ENCODE measurements at regions of chr17 and their contacts with region 1.

Region 1: DNA sequence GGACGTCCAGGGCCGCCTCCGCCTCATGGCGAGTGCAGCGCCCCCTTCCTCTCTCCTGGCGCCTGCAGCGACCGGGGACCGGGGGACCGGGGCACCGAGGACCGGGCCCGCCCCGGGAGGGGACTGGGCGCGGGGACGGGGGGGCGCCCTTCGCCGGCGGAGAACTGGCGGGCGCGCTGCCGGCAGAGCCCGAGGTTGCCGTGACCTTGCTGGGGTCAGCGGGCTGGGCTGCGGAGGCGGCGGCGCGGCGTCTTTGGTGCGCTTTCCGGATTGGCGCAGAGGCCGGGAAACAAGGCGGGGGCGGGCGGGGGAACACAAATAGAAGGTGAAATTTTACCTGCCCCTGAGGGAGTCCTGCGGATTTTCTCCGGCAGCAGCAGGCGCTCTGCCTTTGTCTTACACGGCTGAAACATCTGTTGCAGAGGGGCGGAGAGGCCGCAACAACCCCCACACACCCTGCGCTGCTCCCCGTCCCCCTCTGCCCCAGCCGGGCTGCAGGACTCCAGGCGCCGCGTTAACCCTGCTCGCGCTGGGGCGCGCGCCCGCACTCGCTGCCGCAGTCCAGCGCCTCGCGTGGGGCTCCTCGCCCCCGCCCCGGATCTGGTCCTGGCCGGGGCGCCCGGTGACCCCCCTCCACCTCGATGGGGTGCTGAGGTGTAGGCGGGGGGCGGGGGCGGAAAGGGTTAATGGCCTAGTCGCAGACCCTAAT is 53.5 kb downstream of the SREBF1 start:
- DNase-seq: peak; percentile 32
- ATAC-seq: peak; percentile 32
- H3K4me3 Mint-ChIP-seq: peak overlapping the region; percentile 88
- H3K27ac Mint-ChIP-seq: no peak overlapping the region
- H3K4me1 Mint-ChIP-seq: peaks cover 27% of the 10 kb centered on the region
- H3K27me3 Mint-ChIP-seq: peaks cover 2% of the 10 kb centered on the region
- CTCF ChIP-seq: no peak

Region 2: DNA sequence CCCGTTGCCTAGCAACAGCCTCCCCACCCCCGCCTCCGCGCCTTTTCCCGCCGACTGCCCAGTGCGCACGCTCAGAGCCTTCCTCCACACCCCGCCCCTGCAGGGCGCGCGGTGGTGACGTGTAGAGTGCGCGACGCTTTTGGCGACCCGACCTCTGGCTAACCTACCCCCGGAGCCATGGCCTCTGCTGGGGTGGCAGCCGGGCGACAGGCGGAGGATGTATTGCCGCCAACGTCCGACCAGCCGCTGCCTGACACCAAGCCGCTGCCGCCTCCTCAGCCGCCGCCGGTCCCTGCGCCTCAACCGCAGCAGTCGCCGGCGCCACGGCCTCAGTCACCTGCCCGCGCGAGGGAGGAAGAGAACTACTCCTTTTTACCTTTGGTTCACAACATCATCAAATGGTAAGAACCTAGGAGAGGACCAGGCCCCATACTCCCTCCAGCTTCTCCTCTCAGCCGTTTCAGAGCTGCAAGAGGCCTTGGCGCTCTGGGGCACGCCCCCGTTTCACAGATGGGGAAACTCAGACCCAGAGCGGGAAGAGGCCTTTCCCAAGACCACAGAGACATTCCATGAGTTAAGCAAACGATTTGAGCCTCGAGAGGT is 306.3 kb before region 1 on chr17 and contains the start of gene MED9:
- CTCF ChIA-PET with region 1: no interaction called
- POLR2A ChIA-PET with region 1: interaction called, 10 read pairs
- intact Hi-C with region 1: loop called (anchors 1 kb)
- DNase-seq: peak; percentile 93
- ATAC-seq: peak; percentile 100
- H3K4me3 Mint-ChIP-seq: peak within 1 kb of the TSS; percentile 90
- H3K27ac Mint-ChIP-seq: peak within 1 kb of the TSS; percentile 84
- H3K4me1 Mint-ChIP-seq: peaks cover 30% of the 10 kb centered on the region
- H3K27me3 Mint-ChIP-seq: no peaks in the 10 kb centered on the region
- CTCF ChIP-seq: no peak
- total RNA-seq, gene MED9: 16.2 and 20.1 TPM in 2 replicates

Region 3: GRCh38 chr17:17694169-17695081 is 88.8 kb before region 1 on chr17:
- CTCF ChIA-PET with region 1: no interaction called
- POLR2A ChIA-PET with region 1: no interaction called
- intact Hi-C with region 1: loop called (anchors 1 kb)
- DNase-seq: peak; percentile 81
- ATAC-seq: peak; percentile 70
- H3K4me3 Mint-ChIP-seq: peak overlapping the region; percentile 86
- H3K27ac Mint-ChIP-seq: peak overlapping the region; percentile 96
- H3K4me1 Mint-ChIP-seq: peaks cover 54% of the 10 kb centered on the region
- H3K27me3 Mint-ChIP-seq: no peaks in the 10 kb centered on the region
- CTCF ChIP-seq: no peak

Region 4: DNA sequence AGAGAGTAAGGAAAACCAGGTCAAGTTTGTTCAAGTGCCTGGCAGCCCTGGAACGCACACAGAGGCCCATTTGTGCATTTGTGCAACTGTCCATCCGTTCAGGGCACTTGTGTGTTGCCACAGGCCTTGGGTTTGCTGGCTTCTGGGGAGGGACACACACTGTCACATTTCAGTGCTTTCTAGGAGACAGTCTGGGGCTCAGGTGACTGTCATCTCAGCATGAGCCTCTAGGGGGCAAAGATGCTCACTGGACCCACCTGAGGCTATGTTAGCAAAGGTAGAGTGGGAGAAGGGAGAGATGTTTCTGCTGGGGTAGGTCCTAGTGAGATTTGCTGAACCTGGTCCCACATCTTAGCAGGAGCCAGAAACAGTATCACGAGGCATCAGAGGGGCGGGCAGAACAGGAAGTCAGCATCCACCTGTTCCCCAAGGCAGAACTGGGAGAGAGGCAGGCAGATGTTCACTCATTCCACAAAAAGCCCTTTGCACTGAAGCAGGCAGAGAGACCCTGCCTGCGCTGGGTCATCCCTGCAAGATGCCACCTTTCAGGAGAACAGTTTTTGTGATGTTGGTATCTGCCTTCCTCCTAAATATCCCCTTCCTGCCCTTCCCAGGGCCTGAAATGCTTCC is 53.5 kb before region 1 on chr17:
- CTCF ChIA-PET with region 1: no interaction called
- POLR2A ChIA-PET with region 1: no interaction called
- intact Hi-C with region 1: loop called (anchors 2 kb)
- DNase-seq: no peak
- ATAC-seq: peak; percentile 93
- H3K4me3 Mint-ChIP-seq: no peak overlapping the region
- H3K27ac Mint-ChIP-seq: no peak overlapping the region
- H3K4me1 Mint-ChIP-seq: peaks cover 16% of the 10 kb centered on the region
- H3K27me3 Mint-ChIP-seq: no peaks in the 10 kb centered on the region
- CTCF ChIP-seq: no peak

Region 5: DNA sequence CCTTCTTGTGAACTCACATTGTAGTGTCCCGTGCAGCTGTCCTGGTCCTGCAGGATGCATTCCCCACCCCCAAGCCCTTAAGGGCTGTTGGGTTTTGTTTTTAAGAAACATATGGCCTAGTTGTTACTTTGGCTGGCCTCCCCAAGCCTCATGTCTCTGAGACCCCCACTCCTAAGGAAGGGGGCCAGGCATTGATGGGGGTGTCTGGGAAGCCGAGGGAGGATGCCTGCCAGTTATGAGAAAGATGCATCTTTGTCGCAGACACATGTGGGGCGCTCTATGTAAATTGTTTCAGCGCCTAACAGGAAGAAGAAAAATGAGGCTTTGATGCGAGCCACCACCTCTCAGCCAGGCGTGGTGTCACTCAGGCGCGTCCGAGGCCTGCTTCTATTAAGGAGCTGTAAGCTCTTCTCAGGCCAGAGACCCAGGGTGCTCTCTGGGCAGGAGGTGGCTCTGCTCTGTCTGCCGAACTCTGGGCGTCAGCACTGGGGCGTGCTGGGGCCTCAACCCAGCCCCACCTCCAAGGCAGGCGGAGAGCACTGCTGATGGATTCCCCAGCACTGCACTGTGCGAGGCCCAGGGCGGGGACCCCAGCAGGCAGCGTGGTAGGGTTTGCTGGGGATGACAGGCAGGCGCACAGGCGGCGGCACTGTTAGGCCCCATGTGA is 17.1 kb before region 1 on chr17:
- CTCF ChIA-PET with region 1: no interaction called
- POLR2A ChIA-PET with region 1: no interaction called
- intact Hi-C with region 1: loop called (anchors 2 kb)
- DNase-seq: no peak
- ATAC-seq: peak; percentile 91
- H3K4me3 Mint-ChIP-seq: peak overlapping the region; percentile 48
- H3K27ac Mint-ChIP-seq: peak overlapping the region; percentile 89
- H3K4me1 Mint-ChIP-seq: peaks cover 47% of the 10 kb centered on the region
- H3K27me3 Mint-ChIP-seq: no peaks in the 10 kb centered on the region
- CTCF ChIP-seq: no peak

Region 6: GRCh38 chr17:17800504-17801021 is 17.3 kb after region 1 on chr17:
- CTCF ChIA-PET with region 1: no interaction called
- POLR2A ChIA-PET with region 1: no interaction called
- intact Hi-C with region 1: no loop called
- DNase-seq: no peak
- ATAC-seq: no peak
- H3K4me3 Mint-ChIP-seq: no peak overlapping the region
- H3K27ac Mint-ChIP-seq: no peak overlapping the region
- H3K4me1 Mint-ChIP-seq: no peaks in the 10 kb centered on the region
- H3K27me3 Mint-ChIP-seq: no peaks in the 10 kb centered on the region
- CTCF ChIP-seq: no peak

Region 7: GRCh38 chr17:17886226-17886625 is 103.0 kb after region 1 on chr17:
- CTCF ChIA-PET with region 1: no interaction called
- POLR2A ChIA-PET with region 1: no interaction called
- intact Hi-C with region 1: no loop called
- DNase-seq: no peak
- ATAC-seq: no peak
- H3K4me3 Mint-ChIP-seq: no peak overlapping the region
- H3K27ac Mint-ChIP-seq: no peak overlapping the region
- H3K4me1 Mint-ChIP-seq: peaks cover 9% of the 10 kb centered on the region
- H3K27me3 Mint-ChIP-seq: no peaks in the 10 kb centered on the region
- CTCF ChIP-seq: no peak